ENCODE measurements at regions of chr5 and their contacts with region 1.

Region 1: GRCh38 chr5:41924872-41925554 is at the start of gene FBXO4:
- DNase-seq: peak; percentile 79 to 92 (median 88)
- ATAC-seq: peak; percentile 97
- H3K4me3 ChIP-seq: peak within 1 kb of the TSS; percentile 85
- H3K4me3 Mint-ChIP-seq: peak within 1 kb of the TSS; percentile 83 to 93 (median 88)
- H3K27ac ChIP-seq: peak within 1 kb of the TSS; percentile 96
- H3K27ac Mint-ChIP-seq: peak within 1 kb of the TSS; percentile 93 to 100 (median 97)
- H3K4me1 ChIP-seq: peaks cover 6 to 14% of the 10 kb centered on the region in 2 donors
- H3K4me1 Mint-ChIP-seq: peaks cover 9 to 43% (median 25%) of the 10 kb centered on the region in 7 donors
- H3K27me3 ChIP-seq: no peaks in the 10 kb centered on the region
- H3K27me3 Mint-ChIP-seq: no peaks in the 10 kb centered on the region
- total RNA-seq, gene FBXO4: 10.9 to 15.0 (median 14.6) TPM

Region 2: GRCh38 chr5:40223884-40224402 is 1701.1 kb before region 1 on chr5:
- CTCF ChIA-PET with region 1: no interaction called
- POLR2A ChIA-PET with region 1: no interaction called
- intact Hi-C with region 1: no loop called
- DNase-seq: peak in 1 of 9 donors; percentile 34
- ATAC-seq: peak; percentile 40
- H3K4me3 ChIP-seq: no peak overlapping the region
- H3K4me3 Mint-ChIP-seq: peak overlapping the region in 1 of 10 donors; percentile 70
- H3K27ac ChIP-seq: no peak overlapping the region
- H3K27ac Mint-ChIP-seq: peak overlapping the region in 1 of 9 donors; percentile 79
- H3K4me1 ChIP-seq: peaks cover 0 to 4% of the 10 kb centered on the region in 2 donors
- H3K4me1 Mint-ChIP-seq: peaks cover 0 to 36% (median 6%) of the 10 kb centered on the region in 7 donors
- H3K27me3 ChIP-seq: no peaks in the 10 kb centered on the region
- H3K27me3 Mint-ChIP-seq: peaks cover 0 to 5% (median 0%) of the 10 kb centered on the region in 5 donors

Region 3: DNA sequence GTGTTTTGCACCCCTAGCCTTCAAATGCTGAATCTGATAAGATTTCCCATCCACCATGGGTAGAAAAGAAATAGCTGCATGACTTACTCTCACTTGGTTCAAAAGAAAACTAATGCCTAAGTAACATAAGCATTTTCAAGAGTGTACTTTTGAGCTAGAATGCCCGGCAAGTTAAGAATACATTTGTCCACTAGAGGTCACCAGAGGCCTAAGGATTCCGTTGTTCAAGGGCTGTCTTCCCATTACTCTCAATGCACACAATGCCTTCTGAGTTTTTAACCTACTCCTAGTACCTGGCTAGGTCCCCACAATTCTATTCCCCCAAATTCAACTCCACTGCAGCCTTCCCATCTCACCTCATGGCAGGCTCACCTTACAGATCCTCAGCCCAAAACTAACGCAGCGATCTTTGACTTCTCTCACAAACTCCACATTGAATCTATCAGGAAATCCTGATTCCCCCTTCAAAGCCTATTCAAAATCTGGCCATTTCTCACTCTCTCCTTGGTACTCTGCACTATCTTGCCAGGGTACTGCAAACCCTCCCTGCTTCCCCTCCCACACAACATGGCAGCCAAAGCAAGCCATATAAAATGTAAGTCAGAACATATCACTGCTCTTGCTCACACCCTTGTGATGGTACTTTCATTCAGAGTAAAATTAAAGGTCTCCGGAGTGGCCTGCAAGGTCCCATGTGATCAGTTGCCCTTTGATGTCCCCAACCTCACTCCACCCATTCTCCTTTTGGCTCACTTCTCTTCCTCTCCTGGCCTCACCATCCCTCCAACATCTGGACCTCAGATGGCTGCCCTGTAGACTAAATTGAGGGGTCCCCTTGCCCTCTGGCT is 68.1 kb before region 1 on chr5:
- CTCF ChIA-PET with region 1: interaction called, 3 read pairs
- POLR2A ChIA-PET with region 1: no interaction called
- intact Hi-C with region 1: loop called (anchors 1 kb)
- DNase-seq: peak in 8 of 9 donors; percentile 34 to 77 (median 71)
- ATAC-seq: peak; percentile 93
- H3K4me3 ChIP-seq: no peak overlapping the region
- H3K4me3 Mint-ChIP-seq: no peak overlapping the region
- H3K27ac ChIP-seq: peak overlapping the region; percentile 1
- H3K27ac Mint-ChIP-seq: no peak overlapping the region
- H3K4me1 ChIP-seq: no peaks in the 10 kb centered on the region
- H3K4me1 Mint-ChIP-seq: peaks cover under 1 to 13% (median 7%) of the 10 kb centered on the region in 7 donors
- H3K27me3 ChIP-seq: no peaks in the 10 kb centered on the region
- H3K27me3 Mint-ChIP-seq: no peaks in the 10 kb centered on the region

Region 4: GRCh38 chr5:42057254-42057690 is 132.3 kb after region 1 on chr5:
- CTCF ChIA-PET with region 1: interaction called, 3 read pairs
- POLR2A ChIA-PET with region 1: no interaction called
- intact Hi-C with region 1: loop called in 1 of 2 experiments (anchors 5 kb)
- DNase-seq: peak in 8 of 9 donors; percentile 25 to 58 (median 51)
- ATAC-seq: peak; percentile 87
- H3K4me3 ChIP-seq: no peak overlapping the region
- H3K4me3 Mint-ChIP-seq: no peak overlapping the region
- H3K27ac ChIP-seq: no peak overlapping the region
- H3K27ac Mint-ChIP-seq: no peak overlapping the region
- H3K4me1 ChIP-seq: no peaks in the 10 kb centered on the region
- H3K4me1 Mint-ChIP-seq: peaks cover 0 to 4% (median 0%) of the 10 kb centered on the region in 7 donors
- H3K27me3 ChIP-seq: no peaks in the 10 kb centered on the region
- H3K27me3 Mint-ChIP-seq: peaks cover 0 to 12% (median 5%) of the 10 kb centered on the region in 5 donors

Region 5: GRCh38 chr5:42908509-42909488 is 983.8 kb after region 1 on chr5:
- CTCF ChIA-PET with region 1: no interaction called
- POLR2A ChIA-PET with region 1: no interaction called
- intact Hi-C with region 1: loop called in 1 of 2 experiments (anchors 10 kb)
- DNase-seq: peak; percentile 76 to 93 (median 88)
- ATAC-seq: peak; percentile 92
- H3K4me3 ChIP-seq: peak overlapping the region; percentile 72
- H3K4me3 Mint-ChIP-seq: peak overlapping the region; percentile 89 to 98 (median 94)
- H3K27ac ChIP-seq: peak overlapping the region; percentile 76
- H3K27ac Mint-ChIP-seq: peak overlapping the region; percentile 64 to 97 (median 95)
- H3K4me1 ChIP-seq: peaks cover 0 to 4% of the 10 kb centered on the region in 2 donors
- H3K4me1 Mint-ChIP-seq: peaks cover 5 to 22% (median 19%) of the 10 kb centered on the region in 7 donors
- H3K27me3 ChIP-seq: no peaks in the 10 kb centered on the region
- H3K27me3 Mint-ChIP-seq: peaks cover 0 to 43% (median 0%) of the 10 kb centered on the region in 5 donors

Region 6: GRCh38 chr5:43602461-43603343 is 1677.7 kb after region 1 on chr5 and contains the start of gene NNT:
- CTCF ChIA-PET with region 1: no interaction called
- POLR2A ChIA-PET with region 1: no interaction called
- intact Hi-C with region 1: loop called in 1 of 2 experiments (anchors 5 kb)
- DNase-seq: peak; percentile 71 to 85 (median 78)
- ATAC-seq: peak; percentile 85
- H3K4me3 ChIP-seq: peak within 1 kb of the TSS; percentile 78
- H3K4me3 Mint-ChIP-seq: peak within 1 kb of the TSS; percentile 90 to 99 (median 94)
- H3K27ac ChIP-seq: peak within 1 kb of the TSS; percentile 87
- H3K27ac Mint-ChIP-seq: peak within 1 kb of the TSS; percentile 86 to 98 (median 93)
- H3K4me1 ChIP-seq: peaks cover 6 to 14% of the 10 kb centered on the region in 2 donors
- H3K4me1 Mint-ChIP-seq: peaks cover 26 to 72% (median 60%) of the 10 kb centered on the region in 7 donors
- H3K27me3 ChIP-seq: no peaks in the 10 kb centered on the region
- H3K27me3 Mint-ChIP-seq: no peaks in the 10 kb centered on the region
- total RNA-seq, gene NNT: 42.5 to 73.5 (median 60.7) TPM

Measured in naive thymus-derived CD4-positive, alpha-beta T cell (primary cell).